Transverse colon (tissue), 4 donors: ENCODE measurements at regions of chr13 and their contacts with region 1.

Region 1: GRCh38 chr13:45989607-45990006 is 62.9 kb downstream of the ZC3H13 start:
- DNase-seq: no peak
- H3K4me3 ChIP-seq: no peak overlapping the region
- H3K27ac ChIP-seq: no peak overlapping the region
- H3K4me1 ChIP-seq: no peaks in the 10 kb centered on the region
- H3K27me3 ChIP-seq: no peaks in the 10 kb centered on the region
- CTCF ChIP-seq: no peak
- EP300 ChIP-seq: no peak
- POLR2A ChIP-seq: no peak

Region 2: GRCh38 chr13:45511310-45512097 is 478.1 kb before region 1 on chr13:
- in situ Hi-C with region 1: loop called in 1 of 4 experiments (anchors 25 kb)
- intact Hi-C with region 1: no loop called
- DNase-seq: no peak
- H3K4me3 ChIP-seq: no peak overlapping the region
- H3K27ac ChIP-seq: no peak overlapping the region
- H3K4me1 ChIP-seq: no peaks in the 10 kb centered on the region
- H3K27me3 ChIP-seq: no peaks in the 10 kb centered on the region
- CTCF ChIP-seq: peak; percentile 77 to 97 (median 90)
- EP300 ChIP-seq: no peak
- POLR2A ChIP-seq: no peak

Region 3: DNA sequence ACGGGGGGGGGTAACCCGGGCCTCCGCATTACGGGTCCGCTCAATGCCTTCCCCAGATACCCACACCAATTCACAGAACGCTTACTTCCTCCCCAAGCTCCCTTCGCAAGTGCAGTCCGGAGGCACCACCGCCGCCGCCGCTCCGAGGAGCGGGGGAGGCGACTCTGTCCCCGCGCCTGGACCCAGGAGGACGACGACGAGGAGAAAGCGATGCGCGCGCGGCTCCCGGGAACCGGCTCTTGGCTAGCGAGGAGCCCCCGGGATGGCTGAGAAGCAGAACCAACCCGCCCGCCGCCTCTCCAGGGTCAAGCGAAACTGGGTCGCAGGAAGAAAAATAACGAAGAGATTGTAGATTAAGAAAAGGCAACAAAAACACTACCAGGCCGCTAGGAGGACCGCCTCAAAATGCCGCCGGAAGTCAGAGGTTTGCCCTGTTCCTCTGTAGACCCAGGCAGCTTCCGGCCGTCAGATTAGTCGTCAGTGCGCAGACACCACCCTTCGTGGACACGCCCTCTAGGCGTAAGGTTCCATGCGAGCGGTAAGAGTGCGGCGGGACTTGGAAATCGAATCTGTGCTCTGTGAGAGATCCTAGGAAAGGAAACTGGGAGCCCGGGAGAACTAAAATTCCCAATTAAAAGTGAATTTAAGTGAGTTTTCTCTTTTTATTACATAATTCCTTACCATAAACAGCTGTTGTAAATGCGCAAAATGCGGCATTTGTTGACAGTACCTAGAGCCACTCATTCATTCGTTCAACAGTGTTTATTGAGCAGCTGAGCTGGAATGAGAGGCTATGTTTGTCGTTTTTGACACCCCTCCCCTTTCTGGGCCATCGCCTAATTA is 62.9 kb after region 1 on chr13 and contains the start of gene ZC3H13:
- in situ Hi-C with region 1: no loop called
- intact Hi-C with region 1: no loop called
- DNase-seq: peak; percentile 94
- H3K4me3 ChIP-seq: peak within 1 kb of the TSS; percentile 88 to 97 (median 92)
- H3K27ac ChIP-seq: peak within 1 kb of the TSS; percentile 92 to 98 (median 95)
- H3K4me1 ChIP-seq: peaks cover 7 to 32% (median 23%) of the 10 kb centered on the region in 4 donors
- H3K27me3 ChIP-seq: no peaks in the 10 kb centered on the region
- CTCF ChIP-seq: peak; percentile 25 to 70 (median 38)
- EP300 ChIP-seq: no peak
- POLR2A ChIP-seq: peak; percentile 81
- total RNA-seq, gene ZC3H13: 14.2 to 67.5 (median 23.7) TPM